Caco-2 (cell line): ENCODE measurements at regions of chr4 and their contacts with region 1.

Region 1: GRCh38 chr4:174522183-174523048 is at the start of gene HPGD:
- DNase-seq: peak; percentile 74 to 79
- H3K4me3 ChIP-seq: peak within 1 kb of the TSS; percentile 63
- H3K4me3 Mint-ChIP-seq: peak within 1 kb of the TSS; percentile 89
- H3K27ac Mint-ChIP-seq: peak within 1 kb of the TSS; percentile 70
- H3K4me1 ChIP-seq: peaks cover 25% of the 10 kb centered on the region
- H3K4me1 Mint-ChIP-seq: peaks cover 43% of the 10 kb centered on the region
- H3K27me3 ChIP-seq: no peaks in the 10 kb centered on the region
- H3K27me3 Mint-ChIP-seq: no peaks in the 10 kb centered on the region
- CTCF ChIP-seq: no peak
- total RNA-seq, gene HPGD: 85.5 and 91.5 TPM in 2 replicates

Region 2: DNA sequence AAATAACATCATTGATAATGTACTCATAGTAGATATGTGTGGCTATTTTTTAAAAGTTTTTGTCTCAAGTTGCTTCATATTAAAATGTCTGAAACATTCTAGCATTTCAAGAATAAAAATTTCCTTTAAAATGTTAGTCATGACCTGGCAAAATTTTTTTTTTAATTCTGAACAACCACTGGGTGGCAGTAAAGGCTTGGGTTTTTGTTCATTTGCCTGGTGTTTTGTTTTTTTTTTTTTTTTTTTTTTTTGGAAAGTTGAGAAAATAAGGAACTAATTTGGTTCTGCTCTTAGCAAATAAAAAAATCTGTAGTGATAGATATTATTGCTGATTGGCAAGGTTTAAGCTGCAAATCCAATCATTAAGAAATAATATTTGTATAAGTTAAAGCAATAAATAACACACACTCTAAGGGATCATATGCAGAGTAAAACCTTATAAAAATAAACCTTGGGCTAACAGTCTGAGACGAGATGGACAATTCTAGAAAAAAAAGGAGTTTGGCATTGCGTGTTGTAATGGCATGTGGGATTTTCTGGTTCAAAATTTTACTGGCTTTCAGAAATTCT is 157.3 kb before region 1 on chr4:
- CTCF ChIA-PET with region 1: no interaction called
- POLR2A ChIA-PET with region 1: no interaction called
- intact Hi-C with region 1: loop called (anchors 1 kb)
- DNase-seq: peak in 1 of 2 experiments; percentile 66
- H3K4me3 ChIP-seq: no peak overlapping the region
- H3K4me3 Mint-ChIP-seq: no peak overlapping the region
- H3K27ac Mint-ChIP-seq: no peak overlapping the region
- H3K4me1 ChIP-seq: peaks cover 25% of the 10 kb centered on the region
- H3K4me1 Mint-ChIP-seq: no peaks in the 10 kb centered on the region
- H3K27me3 ChIP-seq: no peaks in the 10 kb centered on the region
- H3K27me3 Mint-ChIP-seq: no peaks in the 10 kb centered on the region
- CTCF ChIP-seq: peak; percentile 34 to 56

Region 3: GRCh38 chr4:174402470-174403176 is 119.8 kb before region 1 on chr4:
- CTCF ChIA-PET with region 1: no interaction called
- POLR2A ChIA-PET with region 1: interaction called, 3 read pairs
- intact Hi-C with region 1: loop called (anchors 1 kb)
- DNase-seq: peak in 1 of 2 experiments; percentile 11
- H3K4me3 ChIP-seq: no peak overlapping the region
- H3K4me3 Mint-ChIP-seq: peak overlapping the region; percentile 64
- H3K27ac Mint-ChIP-seq: peak overlapping the region; percentile 87
- H3K4me1 ChIP-seq: peaks cover 64% of the 10 kb centered on the region
- H3K4me1 Mint-ChIP-seq: peaks cover 38% of the 10 kb centered on the region
- H3K27me3 ChIP-seq: no peaks in the 10 kb centered on the region
- H3K27me3 Mint-ChIP-seq: no peaks in the 10 kb centered on the region
- CTCF ChIP-seq: no peak

Region 4: DNA sequence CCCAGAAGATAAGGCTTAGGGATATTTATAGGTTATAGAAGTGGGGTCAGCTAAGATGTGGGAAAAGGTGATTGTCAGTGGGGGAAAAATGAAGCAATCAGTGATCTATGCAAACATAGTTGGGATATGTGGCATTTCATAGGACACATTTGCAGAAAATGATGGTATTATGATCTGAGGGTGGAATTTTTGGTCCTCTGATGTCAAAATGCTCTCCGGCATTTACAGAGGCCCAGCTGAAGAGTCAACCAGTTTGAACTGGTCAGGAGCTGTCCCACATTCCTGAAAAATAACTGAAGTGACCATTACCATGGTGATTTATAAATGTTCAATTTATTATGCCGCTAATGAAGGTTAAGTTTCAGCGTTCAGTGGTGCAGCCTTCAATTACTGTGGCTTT is 12.1 kb after region 1 on chr4:
- CTCF ChIA-PET with region 1: no interaction called
- POLR2A ChIA-PET with region 1: no interaction called
- intact Hi-C with region 1: loop called (anchors 1 kb)
- DNase-seq: peak; percentile 45 to 48
- H3K4me3 ChIP-seq: no peak overlapping the region
- H3K4me3 Mint-ChIP-seq: no peak overlapping the region
- H3K27ac Mint-ChIP-seq: peak overlapping the region; percentile 43
- H3K4me1 ChIP-seq: peaks cover 28% of the 10 kb centered on the region
- H3K4me1 Mint-ChIP-seq: peaks cover 30% of the 10 kb centered on the region
- H3K27me3 ChIP-seq: no peaks in the 10 kb centered on the region
- H3K27me3 Mint-ChIP-seq: no peaks in the 10 kb centered on the region
- CTCF ChIP-seq: no peak

Region 5: GRCh38 chr4:174697202-174697601 is 174.8 kb after region 1 on chr4:
- CTCF ChIA-PET with region 1: no interaction called
- POLR2A ChIA-PET with region 1: no interaction called
- intact Hi-C with region 1: no loop called
- DNase-seq: no peak
- H3K4me3 ChIP-seq: no peak overlapping the region
- H3K4me3 Mint-ChIP-seq: no peak overlapping the region
- H3K27ac Mint-ChIP-seq: no peak overlapping the region
- H3K4me1 ChIP-seq: no peaks in the 10 kb centered on the region
- H3K4me1 Mint-ChIP-seq: no peaks in the 10 kb centered on the region
- H3K27me3 ChIP-seq: no peaks in the 10 kb centered on the region
- H3K27me3 Mint-ChIP-seq: peaks cover 9% of the 10 kb centered on the region
- CTCF ChIP-seq: no peak

Region 6: DNA sequence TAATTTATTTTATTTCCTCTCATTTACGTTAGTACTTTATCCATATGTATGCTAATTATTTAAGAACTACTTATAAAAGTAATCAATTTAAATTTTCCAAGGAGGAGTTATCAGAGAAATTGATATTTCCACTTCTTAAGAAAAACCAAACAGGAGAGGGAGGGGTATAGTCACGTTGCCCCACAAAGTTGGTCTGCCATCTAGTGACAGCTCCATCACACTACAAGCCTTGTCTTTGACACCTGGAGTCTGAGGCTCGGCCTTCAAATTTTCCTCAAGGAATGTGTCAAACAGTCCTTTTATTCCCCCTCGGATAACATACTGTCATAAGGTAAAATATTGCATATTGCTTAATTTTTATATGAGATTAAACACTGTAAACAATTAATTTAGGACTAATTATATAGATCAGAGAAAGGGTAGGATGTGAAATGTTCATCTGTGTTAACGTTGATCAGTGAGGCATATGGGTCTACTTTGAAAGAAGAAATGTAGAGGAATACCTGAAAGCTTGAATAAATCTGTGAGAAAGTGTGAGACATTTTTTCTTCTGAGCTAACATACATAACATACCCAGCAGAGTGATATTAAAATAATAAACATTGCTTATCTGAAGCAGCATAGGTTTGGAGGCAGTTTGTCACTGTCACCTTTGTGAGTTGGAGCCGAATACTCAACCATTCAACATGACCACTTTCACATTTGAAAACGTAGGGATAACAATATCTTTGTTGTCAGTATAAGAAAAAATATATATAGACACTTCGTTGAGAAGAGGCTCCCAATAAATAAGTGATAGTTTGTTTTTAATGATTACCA is 192.2 kb after region 1 on chr4:
- CTCF ChIA-PET with region 1: no interaction called
- POLR2A ChIA-PET with region 1: no interaction called
- intact Hi-C with region 1: loop called (anchors 5 kb)
- DNase-seq: peak; percentile 50 to 65
- H3K4me3 ChIP-seq: no peak overlapping the region
- H3K4me3 Mint-ChIP-seq: no peak overlapping the region
- H3K27ac Mint-ChIP-seq: no peak overlapping the region
- H3K4me1 ChIP-seq: 0 out of 2 replicates have a peak, but pooled peaks cover 4% of the 10 kb centered on the region
- H3K4me1 Mint-ChIP-seq: peaks cover 8% of the 10 kb centered on the region
- H3K27me3 ChIP-seq: no peaks in the 10 kb centered on the region; the same call in 1 of the 2 replicates
- H3K27me3 Mint-ChIP-seq: peaks cover 5% of the 10 kb centered on the region
- CTCF ChIP-seq: peak; percentile 66 to 85